Heart left ventricle (tissue), 16 donors: ENCODE measurements at regions of chr9 and their contacts with region 1.

Region 1: DNA sequence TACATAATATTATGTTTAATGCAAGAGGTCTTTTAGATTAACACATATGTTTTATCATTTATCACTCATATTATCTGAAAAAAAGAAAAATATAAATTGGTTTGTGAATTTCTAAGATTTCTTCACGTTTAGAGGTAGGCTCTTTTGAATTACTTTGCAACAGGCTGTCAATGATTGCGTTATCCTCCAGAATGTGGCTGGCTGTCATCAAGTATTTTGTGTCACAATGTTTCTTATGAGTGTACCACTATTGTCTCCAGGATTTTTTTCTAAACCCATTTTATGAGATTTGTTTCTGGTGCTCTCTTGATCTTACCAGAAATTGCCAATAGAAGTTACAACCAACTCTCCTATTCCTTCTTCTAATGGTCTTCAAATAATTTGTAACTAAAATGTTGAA is 307.9 kb downstream of the DMAC1 start:
- DNase-seq: no peak
- ATAC-seq: no peak
- H3K4me3 ChIP-seq: no peak overlapping the region
- H3K27ac ChIP-seq: no peak overlapping the region
- H3K4me1 ChIP-seq: no peaks in the 10 kb centered on the region
- H3K27me3 ChIP-seq: no peaks in the 10 kb centered on the region
- CTCF ChIP-seq: no peak
- POLR2A ChIP-seq: no peak

Region 2: DNA sequence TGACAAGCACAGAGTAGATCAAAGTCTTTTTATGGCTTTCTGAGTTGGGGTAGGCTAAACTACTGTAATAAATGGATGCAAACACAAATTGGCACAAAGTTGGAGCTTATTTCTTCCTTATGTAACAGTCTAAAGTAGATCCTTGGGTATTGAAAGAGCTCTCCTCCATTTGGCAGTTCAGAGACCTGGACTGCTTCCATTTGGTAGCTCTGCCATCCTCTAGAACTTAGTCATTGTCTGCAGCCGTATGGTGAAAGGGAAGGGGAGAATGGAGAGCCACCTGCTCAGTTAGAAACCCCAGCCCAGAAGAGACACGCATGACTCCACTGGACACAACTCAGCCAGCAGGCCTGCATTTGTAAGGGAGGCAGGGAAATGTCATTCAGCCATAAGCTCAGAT is 37.0 kb before region 1 on chr9:
- intact Hi-C with region 1: loop called in 1 of 10 experiments (anchors 5 kb)
- DNase-seq: no peak
- ATAC-seq: no peak
- H3K4me3 ChIP-seq: no peak overlapping the region
- H3K27ac ChIP-seq: no peak overlapping the region
- H3K4me1 ChIP-seq: peaks cover 0 to 9% (median 0%) of the 10 kb centered on the region in 12 donors
- H3K27me3 ChIP-seq: no peaks in the 10 kb centered on the region
- CTCF ChIP-seq: no peak
- POLR2A ChIP-seq: no peak

Region 3: GRCh38 chr9:7676609-7677156 is 185.0 kb after region 1 on chr9:
- intact Hi-C with region 1: no loop called
- DNase-seq: no peak
- ATAC-seq: no peak
- H3K4me3 ChIP-seq: no peak overlapping the region
- H3K27ac ChIP-seq: no peak overlapping the region
- H3K4me1 ChIP-seq: no peaks in the 10 kb centered on the region
- H3K27me3 ChIP-seq: no peaks in the 10 kb centered on the region
- CTCF ChIP-seq: no peak
- POLR2A ChIP-seq: no peak